Naive thymus-derived CD4-positive, alpha-beta T cell (primary cell): ENCODE measurements at regions of chr7 and their contacts with region 1.

Region 1: DNA sequence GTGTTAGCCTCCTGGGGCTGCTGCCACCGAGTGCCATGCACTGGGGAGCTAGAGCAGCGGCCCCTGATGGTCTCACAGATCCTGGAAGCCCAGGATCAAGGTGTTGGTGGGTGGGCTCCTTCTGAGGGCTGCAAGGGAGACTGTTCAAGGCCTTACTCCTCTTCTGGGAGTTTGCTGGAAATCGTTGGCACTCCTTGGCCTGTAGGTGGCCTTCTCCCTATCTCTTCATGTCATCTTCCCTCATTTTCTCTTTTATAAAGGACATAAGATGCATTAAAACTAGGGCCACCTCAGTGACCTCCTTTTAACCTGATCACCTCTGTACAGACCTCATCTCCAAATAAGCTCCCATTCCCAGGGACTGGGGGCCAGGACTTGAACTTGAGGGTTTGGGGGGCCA is 27.0 kb upstream of the ZNF862 start:
- DNase-seq: no peak
- ATAC-seq: no peak
- H3K4me3 ChIP-seq: no peak overlapping the region
- H3K4me3 Mint-ChIP-seq: no peak overlapping the region
- H3K27ac ChIP-seq: no peak overlapping the region
- H3K27ac Mint-ChIP-seq: no peak overlapping the region
- H3K4me1 ChIP-seq: no peaks in the 10 kb centered on the region
- H3K4me1 Mint-ChIP-seq: peaks cover 0 to 11% (median 7%) of the 10 kb centered on the region in 7 donors
- H3K27me3 ChIP-seq: no peaks in the 10 kb centered on the region
- H3K27me3 Mint-ChIP-seq: no peaks in the 10 kb centered on the region

Region 2: GRCh38 chr7:149883452-149883861 is 72.2 kb after region 1 on chr7:
- CTCF ChIA-PET with region 1: interaction called, 11 read pairs
- POLR2A ChIA-PET with region 1: interaction called, 3 read pairs
- intact Hi-C with region 1: loop called in 1 of 2 experiments (anchors 1 kb)
- DNase-seq: peak in 4 of 9 donors; percentile 58 to 63 (median 60)
- ATAC-seq: peak; percentile 81
- H3K4me3 ChIP-seq: no peak overlapping the region
- H3K4me3 Mint-ChIP-seq: peak overlapping the region in 1 of 10 donors; percentile 38
- H3K27ac ChIP-seq: no peak overlapping the region
- H3K27ac Mint-ChIP-seq: peak overlapping the region in 6 of 9 donors; percentile 11 to 80 (median 62)
- H3K4me1 ChIP-seq: peaks cover 0 to 7% of the 10 kb centered on the region in 2 donors
- H3K4me1 Mint-ChIP-seq: peaks cover 5 to 26% (median 19%) of the 10 kb centered on the region in 7 donors
- H3K27me3 ChIP-seq: no peaks in the 10 kb centered on the region
- H3K27me3 Mint-ChIP-seq: no peaks in the 10 kb centered on the region